Right ventricle myocardium inferior (tissue), 1 donor: ENCODE measurements at regions of chr14 and their contacts with region 1.

Region 1: GRCh38 chr14:93007225-93007997 is 84.5 kb downstream of the CHGA start:
- DNase-seq: peak; percentile 77
- ATAC-seq: no peak

Region 2: DNA sequence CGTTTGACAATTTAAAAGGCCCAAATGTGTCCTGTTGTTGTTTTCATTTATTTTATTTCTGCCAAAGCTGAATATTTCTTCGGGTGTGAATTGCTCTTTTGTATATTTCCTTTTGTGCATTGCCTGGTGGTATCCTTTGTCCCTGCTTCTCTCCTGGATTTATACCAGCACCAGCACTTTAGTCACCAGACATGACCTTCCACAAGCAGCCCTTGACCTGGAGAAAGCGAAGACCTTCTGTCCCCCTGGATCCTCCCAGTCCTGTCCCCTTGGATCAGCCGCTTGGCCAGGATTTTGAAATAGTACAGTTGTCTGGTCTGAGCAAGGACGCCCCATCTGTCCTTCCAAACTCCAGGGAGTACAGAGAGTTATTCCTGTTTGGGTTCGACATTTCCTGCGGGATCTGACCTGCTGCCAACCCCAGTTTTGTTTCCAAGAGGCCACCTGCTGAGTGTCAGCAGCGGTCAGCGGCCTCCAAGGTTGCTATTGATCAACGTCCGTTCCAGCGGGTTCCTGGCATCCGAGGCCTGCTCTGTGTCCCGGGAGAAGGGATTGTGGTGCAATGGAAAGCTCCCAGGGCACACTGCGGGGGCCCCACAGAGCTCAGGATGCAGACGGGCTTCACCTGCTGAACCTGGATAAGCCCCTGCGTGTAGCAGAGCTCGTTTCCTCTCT is 129.5 kb before region 1 on chr14:
- intact Hi-C with region 1: no loop called
- DNase-seq: peak; percentile 73
- ATAC-seq: peak; percentile 89

Region 3: GRCh38 chr14:92959189-92959531 is 48.3 kb before region 1 on chr14:
- intact Hi-C with region 1: loop called (anchors 5 kb)
- DNase-seq: peak; percentile 75
- ATAC-seq: peak; percentile 37

Region 4: DNA sequence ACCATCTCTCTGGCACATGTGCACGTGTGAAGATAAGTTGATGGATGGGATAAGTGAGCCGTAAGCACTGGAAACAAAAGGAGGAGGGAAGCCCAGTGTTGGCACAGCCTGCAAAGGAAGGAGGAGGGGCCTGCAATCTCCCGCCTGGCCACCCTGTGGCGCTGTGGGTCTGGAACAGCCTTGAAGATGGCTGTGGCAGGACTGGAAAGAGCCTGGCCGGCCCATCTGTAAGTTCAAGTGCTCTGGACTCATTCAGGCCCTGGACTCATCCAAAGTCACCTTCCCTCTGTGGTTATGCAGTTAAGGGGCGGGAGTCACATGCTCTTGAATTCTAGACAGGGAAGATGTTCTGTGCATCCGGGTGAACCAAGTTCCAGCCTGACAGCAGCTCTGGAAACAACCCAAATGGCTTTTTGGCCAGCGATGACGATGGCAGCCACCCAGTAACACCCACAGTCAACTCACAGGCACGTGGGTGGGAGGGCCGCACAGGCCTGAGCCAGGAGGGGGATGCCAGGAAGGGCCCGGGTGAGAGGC is 34.1 kb before region 1 on chr14:
- intact Hi-C with region 1: loop called (anchors 5 kb)
- DNase-seq: peak; percentile 87
- ATAC-seq: peak; percentile 93

Region 5: DNA sequence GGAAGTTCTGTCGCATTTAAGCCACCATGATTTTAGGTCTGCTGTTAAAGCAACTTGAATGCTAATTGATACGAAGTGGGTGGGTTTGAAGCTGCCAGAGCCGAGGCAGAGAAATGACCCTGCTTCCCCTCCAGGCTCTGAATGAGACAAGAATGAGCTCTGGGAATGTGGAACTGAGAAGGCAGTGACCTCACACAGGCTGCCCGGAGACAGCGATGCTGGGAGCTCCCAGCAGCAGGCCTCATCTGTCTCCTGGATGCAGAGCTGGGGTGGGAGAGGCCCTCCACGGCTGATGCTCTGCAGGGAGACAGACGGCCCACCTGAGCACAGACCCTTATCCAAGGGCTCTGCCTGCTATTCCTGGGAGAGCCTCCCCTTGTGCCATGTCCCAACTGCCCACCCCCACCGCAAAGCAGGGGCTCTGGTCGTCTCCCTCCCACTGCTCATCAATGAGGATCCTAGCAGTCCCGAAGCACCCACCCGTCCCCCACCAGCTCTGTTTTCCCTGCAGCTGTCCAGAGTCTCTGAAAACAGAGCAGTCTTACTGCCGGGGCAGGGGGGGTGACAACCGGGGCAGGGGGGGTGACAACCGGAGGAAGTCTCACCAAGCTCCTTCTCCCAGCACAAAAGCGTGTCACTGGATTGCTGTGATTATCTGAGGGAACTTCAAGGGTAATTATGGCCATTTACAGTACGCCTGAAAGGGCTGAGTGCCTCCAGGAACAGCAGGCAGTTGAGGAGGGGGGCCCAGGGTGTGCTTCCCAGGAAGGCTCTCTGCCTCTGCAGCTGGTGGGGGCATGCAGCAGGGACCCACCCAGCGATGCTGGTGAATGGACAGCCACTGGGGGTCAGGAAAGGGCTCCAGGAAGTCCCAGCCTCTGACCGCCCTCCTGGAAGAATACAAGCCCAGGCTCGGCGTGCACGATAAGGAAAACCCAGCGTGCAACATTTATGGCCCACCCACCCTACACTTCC is 16.7 kb before region 1 on chr14:
- intact Hi-C with region 1: loop called (anchors 2 kb)
- DNase-seq: no peak
- ATAC-seq: no peak

Region 6: DNA sequence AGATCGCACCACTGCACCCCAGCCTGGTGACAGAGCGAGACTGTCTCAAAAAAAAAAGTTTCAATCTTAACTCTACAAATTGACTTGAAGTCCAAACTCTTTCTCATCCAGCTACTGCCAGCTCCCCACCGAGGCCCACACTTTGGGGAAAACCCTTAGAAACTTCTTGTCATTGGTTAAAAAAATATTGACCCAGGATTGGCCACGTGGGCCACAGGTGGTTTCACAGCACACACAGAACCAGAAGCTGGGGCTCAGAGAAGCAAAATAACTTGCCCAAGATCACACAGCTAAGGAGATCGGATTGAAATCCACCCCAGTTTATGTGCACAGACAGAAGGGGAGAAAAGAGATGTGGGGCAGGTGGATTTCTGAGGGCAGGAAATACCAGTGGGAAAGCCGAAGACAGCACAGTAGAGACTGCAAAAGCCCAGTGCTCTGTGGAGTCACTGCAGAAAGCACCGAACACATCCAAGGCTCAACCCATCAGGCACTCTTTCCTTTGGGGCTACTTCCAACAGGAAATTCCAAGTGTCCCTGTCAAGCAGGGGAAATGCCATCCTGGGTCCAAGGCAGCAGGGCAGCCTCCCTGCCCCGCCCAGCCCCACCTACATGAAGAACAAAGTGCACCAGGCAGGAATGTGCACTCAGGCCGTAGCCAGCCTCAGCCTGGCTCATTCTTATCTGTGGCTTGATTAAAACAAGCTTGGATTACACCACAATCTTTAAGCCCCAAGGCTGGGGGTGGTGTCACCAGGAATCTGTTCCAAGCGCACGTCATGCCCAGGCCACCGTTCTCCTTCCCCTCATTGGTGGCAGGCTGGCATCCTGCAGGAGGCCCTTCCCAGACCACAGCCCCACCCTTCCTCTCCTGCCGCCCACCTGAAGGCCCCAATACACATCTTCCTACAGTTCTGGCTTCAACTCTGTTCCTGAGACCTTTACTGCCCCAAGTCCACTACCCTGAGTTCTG is 35.8 kb after region 1 on chr14:
- intact Hi-C with region 1: loop called (anchors 5 kb)
- DNase-seq: no peak
- ATAC-seq: peak; percentile 74